HEK293T (cell line): ENCODE measurements at regions of chr1 and their contacts with region 1.

Region 1: DNA sequence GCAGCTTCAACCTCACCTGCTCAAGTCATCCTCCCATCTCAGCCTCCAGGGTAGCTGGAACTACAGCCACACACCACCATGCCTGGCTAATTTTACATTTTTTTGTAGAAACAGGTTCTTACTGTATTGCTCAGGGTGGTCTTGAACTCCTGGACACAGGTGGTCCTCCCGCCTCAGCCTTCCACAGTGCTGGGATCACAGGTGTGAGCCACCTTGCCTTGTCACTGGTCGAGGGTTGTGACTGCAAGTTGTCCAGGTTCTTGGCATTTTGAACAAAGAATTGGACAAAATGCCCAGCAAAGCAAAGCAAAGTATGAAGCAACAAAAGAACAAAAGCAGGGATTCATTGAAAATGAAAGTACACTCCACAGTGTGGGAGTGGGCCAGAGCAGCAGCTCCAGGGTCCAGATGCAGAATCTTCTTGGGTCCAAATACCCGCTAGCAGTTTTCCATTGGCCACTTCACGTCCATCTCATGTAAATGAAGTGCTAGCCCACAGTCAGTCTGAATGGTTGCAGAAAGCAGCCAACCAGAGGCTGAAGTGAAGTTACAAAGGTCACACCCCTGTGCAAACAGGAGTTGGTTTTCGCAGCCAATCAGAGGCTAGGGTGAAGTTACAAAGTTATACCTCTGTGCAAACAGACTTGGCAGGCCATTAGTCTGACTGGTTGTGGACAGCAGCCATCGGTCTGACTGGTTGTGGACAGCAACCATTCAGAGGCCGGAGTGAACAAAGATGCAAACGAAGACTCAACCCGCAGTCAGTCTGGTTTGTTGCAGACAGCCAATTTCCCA is 109.5 kb upstream of the KIF26B start:
- DNase-seq: no peak

Region 2: GRCh38 chr1:244603498-244603897 is 441.8 kb before region 1 on chr1:
- CTCF ChIA-PET with region 1: interaction called, 11 read pairs
- POLR2A ChIA-PET with region 1: no interaction called
- DNase-seq: peak; percentile 38

Region 3: GRCh38 chr1:244801246-244801645 is 244.0 kb before region 1 on chr1:
- CTCF ChIA-PET with region 1: interaction called, 17 read pairs
- POLR2A ChIA-PET with region 1: interaction called, 4 read pairs
- DNase-seq: peak; percentile 74

Region 4: DNA sequence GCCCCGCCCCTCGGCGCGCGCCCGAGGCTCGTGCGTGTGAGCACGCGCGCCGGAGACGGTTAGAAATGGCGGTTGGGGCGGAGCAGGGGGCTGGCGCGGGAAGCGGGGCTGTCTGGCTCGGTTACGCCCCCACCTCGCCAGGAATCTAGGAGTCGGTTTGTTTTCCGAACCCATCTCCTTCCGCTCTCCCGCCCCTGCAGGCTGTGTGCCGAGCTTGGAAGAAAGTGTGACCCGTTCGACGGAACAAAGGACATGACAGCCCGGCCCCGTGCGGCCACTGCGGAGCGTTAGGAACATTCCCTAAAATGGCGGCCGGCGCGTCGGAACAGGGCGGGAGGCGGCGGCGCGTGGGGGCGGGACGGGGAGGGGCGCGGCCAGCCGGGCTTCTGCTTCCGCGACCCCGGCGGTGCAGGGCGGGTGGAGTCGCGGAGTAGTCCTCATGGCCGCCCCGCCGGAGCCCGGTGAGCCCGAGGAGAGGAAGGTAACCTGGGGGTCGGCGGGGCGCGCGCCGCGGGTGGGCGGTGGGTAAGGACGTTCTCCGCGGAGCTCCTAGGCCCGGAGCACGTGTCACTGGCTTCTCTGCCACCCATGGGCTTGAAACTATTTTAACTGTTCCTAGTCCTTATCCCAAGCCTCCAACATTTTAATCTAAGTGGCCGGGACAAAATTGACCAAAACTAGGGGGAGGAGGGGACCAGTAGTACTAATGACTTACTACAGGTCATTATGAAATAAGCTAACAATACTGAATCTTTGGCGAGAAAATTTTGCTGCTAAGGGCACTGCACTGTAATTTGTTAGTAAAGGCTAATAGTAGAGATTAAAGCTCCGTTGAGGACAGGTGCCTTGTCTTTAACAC is 209.8 kb before region 1 on chr1 and contains the start of gene COX20:
- CTCF ChIA-PET with region 1: interaction called, 11 read pairs
- POLR2A ChIA-PET with region 1: interaction called, 7 read pairs
- DNase-seq: peak; percentile 90

Region 5: DNA sequence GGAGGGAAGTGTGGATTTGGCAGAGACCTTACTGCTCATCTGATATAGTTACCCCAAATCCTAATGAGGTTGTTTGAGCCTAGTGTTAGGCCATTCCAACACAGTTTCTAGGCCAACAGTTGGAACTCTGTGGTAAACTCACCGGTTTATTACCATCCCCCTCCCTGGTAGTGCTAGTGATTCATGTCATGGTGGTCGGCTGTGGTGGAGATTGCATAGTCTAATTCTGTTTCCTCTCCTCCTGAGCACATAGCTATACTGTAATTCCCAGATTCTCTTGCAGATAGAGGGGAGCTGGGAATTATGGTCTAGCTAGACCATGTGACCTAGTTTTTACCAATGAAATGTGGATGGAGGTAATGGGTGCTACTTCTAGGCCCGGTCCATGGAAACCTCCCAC is 14.2 kb before region 1 on chr1:
- CTCF ChIA-PET with region 1: interaction called, 18 read pairs
- POLR2A ChIA-PET with region 1: no interaction called
- DNase-seq: no peak

Region 6: GRCh38 chr1:245067257-245067656 is 22.0 kb after region 1 on chr1:
- CTCF ChIA-PET with region 1: no interaction called
- POLR2A ChIA-PET with region 1: no interaction called
- DNase-seq: no peak